Activated T-helper 2 cell treated with anti-CD3 and anti-CD28 coated beads, Interferon-gamma antibody, Interleukin-2, Interleukin-4, amounts not matched to agents 10 μg/mL and 5 μg/mL and 100 μg/mL, durations not matched to agents 14 hours and 24 hours and 36 hours (primary cell): ENCODE measurements at regions of chr12 and their contacts with region 1.

Region 1: DNA sequence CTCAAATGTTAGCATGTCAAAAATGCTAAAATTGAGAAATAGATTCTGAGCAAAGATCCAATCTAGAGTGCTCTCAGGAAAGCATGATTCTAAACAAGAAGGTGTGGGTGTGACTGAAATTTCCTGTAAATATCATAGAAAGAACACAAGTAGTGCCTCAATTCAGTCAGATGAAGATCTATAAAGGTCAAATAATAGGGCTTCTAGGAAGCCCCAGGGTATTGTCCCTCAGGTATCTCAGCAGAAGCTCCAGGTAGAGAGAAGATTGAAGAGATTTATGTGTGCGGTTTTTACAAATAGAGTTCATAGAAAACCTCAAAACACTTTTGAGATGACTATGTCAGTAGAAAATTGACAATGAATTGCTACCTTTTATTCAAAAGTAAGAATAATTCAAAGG is 13.0 kb downstream of the KLRD1 start:
- DNase-seq: no peak
- H3K4me3 Mint-ChIP-seq: no peak overlapping the region
- H3K27ac Mint-ChIP-seq: peak overlapping the region; percentile 77
- H3K4me1 Mint-ChIP-seq: peaks cover 37% of the 10 kb centered on the region
- H3K27me3 Mint-ChIP-seq: peaks cover 3% of the 10 kb centered on the region

Region 2: DNA sequence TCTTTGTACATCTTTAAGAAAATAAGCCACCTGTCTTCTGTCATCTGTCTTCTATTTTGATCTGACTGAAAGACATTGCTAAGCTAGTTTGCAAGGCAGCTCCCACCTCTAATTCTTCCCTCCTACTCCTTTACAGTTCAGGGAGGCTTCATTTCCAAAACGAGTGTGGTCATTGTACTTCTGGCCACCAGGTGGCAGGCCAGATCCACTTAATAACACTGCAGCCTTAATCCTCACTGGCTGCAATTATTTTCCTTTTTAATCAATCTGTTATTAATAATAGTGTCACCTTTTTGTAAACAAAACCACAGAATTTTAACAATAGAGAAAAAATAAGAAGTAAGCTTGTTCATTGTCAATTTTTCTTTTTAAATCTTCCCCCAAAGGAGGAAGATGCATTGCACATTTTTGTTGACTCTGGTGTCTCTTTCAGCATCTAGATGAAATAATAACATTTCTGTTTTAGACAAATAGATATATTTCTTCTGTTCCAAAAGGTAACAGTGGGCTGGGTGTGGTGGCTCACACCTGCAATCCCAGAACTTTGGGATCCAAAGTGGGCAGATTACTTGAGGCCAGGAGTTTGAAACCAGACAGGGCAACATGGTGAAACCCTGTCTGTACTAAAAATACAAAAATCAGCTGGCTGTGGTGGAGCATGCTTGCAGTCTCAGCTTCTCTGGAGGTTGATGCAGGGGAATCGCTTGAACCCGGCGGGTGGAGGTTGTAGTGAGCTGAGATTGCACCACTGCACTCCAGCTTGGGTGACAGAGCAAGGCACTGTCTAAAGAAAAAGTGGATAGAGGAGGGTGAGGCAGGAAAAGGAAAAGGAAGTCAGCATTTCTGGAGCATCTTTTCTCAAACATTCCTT is 84.6 kb before region 1 on chr12:
- intact Hi-C with region 1: loop called (anchors 5 kb)
- DNase-seq: no peak
- H3K4me3 Mint-ChIP-seq: no peak overlapping the region
- H3K27ac Mint-ChIP-seq: no peak overlapping the region
- H3K4me1 Mint-ChIP-seq: peaks cover 11% of the 10 kb centered on the region
- H3K27me3 Mint-ChIP-seq: peaks cover 9% of the 10 kb centered on the region

Region 3: DNA sequence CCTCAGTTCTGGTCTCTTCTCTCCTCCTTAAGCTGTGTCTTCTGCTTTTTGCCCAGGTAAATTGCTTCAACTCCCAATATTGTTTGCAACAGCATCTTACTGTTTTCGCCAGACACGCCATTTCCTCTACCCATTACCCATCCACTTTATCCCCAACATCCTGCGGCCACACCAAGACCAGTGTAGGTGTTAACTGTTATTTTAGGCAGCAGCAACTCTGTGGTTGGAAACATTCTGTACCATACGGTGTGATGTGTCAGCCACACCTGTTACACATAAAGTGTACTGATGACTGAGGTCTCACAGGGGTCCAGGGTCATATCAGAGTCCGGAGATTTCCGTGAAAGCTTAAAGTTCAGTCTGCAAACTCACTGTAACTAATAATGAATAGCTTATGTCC is 34.7 kb before region 1 on chr12:
- intact Hi-C with region 1: loop called (anchors 5 kb)
- DNase-seq: no peak
- H3K4me3 Mint-ChIP-seq: no peak overlapping the region
- H3K27ac Mint-ChIP-seq: no peak overlapping the region
- H3K4me1 Mint-ChIP-seq: peaks cover 12% of the 10 kb centered on the region
- H3K27me3 Mint-ChIP-seq: peaks cover 6% of the 10 kb centered on the region

Region 4: DNA sequence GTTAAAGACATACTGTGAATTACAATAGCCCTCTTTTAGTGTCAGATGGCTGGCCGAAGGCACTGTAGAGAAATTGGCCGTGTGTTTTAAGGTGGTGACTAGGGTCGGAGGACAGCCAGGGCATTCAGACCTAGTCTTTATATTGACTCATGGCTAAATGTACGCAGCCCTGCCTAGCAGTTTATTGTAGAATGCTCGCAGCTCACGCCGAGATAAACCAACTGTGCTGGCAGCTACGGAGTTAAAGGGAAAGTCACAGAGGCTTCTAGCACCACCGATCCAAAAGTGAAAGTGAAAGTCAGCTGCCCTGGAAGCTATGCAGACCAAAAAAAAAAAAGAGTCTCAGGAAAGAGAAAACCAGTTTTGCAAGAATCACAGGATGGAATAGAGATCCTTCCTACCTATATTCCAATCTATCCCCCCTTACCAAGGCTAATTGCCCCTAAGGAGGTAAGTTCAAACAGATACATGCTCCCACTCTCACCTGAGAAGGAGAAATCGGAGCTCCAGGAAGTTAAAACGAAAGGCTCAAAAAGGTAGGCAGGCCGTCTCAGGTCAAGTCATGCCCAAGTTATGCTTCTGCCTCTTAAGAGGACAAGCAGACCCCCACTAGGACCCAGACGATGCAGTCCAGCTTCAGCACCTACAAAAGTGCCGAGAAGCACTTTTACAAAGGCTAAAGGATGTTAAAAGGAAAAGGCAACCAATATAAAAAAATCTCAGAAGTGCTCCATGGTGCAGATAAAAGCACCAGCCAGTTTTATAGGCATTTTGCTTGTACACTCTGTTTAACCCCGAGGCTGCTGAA is 44.4 kb after region 1 on chr12:
- intact Hi-C with region 1: loop called (anchors 2 kb)
- DNase-seq: peak; percentile 51
- H3K4me3 Mint-ChIP-seq: no peak overlapping the region
- H3K27ac Mint-ChIP-seq: no peak overlapping the region
- H3K4me1 Mint-ChIP-seq: peaks cover 9% of the 10 kb centered on the region
- H3K27me3 Mint-ChIP-seq: peaks cover 27% of the 10 kb centered on the region

Region 5: DNA sequence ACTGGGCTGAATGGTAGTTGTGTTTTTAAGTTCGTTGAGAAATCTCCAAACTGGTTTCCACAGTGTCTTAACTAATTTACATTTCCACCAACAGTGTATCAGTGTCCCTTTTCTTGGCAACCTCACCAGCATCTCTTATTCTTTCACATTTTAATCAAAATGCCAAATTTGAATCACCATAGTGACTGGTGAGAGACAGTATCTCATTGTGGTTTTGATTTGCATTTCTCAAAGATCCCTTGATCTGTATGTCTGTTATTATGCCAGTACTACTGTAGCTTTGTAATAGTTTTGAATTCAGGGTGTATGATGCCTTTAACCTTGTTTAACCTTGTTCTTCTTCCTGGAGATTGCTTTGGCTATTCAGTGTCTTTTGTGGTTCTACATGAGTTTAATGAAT is 182.8 kb after region 1 on chr12:
- intact Hi-C with region 1: loop called (anchors 1 kb)
- DNase-seq: no peak
- H3K4me3 Mint-ChIP-seq: no peak overlapping the region
- H3K27ac Mint-ChIP-seq: no peak overlapping the region
- H3K4me1 Mint-ChIP-seq: peaks cover 12% of the 10 kb centered on the region
- H3K27me3 Mint-ChIP-seq: peaks cover 5% of the 10 kb centered on the region

Region 6: GRCh38 chr12:10540776-10541205 is 220.1 kb after region 1 on chr12:
- intact Hi-C with region 1: loop called (anchors 1 kb)
- DNase-seq: no peak
- H3K4me3 Mint-ChIP-seq: no peak overlapping the region
- H3K27ac Mint-ChIP-seq: peak overlapping the region; percentile 57
- H3K4me1 Mint-ChIP-seq: peaks cover 8% of the 10 kb centered on the region
- H3K27me3 Mint-ChIP-seq: peaks cover 22% of the 10 kb centered on the region

Region 7: GRCh38 chr12:10673660-10674384 is 353.2 kb after region 1 on chr12 and contains the start of gene STYK1:
- intact Hi-C with region 1: loop called (anchors 5 kb)
- DNase-seq: peak; percentile 71
- H3K4me3 Mint-ChIP-seq: peak within 1 kb of the TSS; percentile 70
- H3K27ac Mint-ChIP-seq: no peak within 1 kb of the TSS
- H3K4me1 Mint-ChIP-seq: peaks cover 39% of the 10 kb centered on the region
- H3K27me3 Mint-ChIP-seq: peaks cover 67% of the 10 kb centered on the region
- total RNA-seq, gene STYK1: not detected in 2 replicates

Region 8: DNA sequence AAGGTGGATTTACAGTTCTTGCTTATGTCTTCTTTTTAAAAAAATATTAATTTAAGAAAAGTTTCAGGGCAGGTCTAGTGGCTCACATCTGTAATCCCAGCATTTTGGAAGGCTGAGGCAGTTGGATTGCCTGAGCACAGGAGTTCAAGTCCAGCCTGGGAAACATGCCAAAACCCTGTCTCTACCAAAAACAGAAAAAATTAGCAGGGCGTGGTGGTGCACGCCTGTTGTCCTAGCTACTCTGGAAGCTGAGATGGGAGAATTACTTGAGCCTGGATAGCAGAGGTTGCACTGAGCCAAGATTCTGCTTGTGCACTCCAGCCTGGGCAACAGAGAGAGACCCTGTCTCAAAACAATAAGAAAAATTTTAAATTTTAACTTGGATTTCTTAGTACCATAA is 746.9 kb after region 1 on chr12:
- intact Hi-C with region 1: no loop called
- DNase-seq: no peak
- H3K4me3 Mint-ChIP-seq: no peak overlapping the region
- H3K27ac Mint-ChIP-seq: no peak overlapping the region
- H3K4me1 Mint-ChIP-seq: no peaks in the 10 kb centered on the region
- H3K27me3 Mint-ChIP-seq: no peaks in the 10 kb centered on the region